Heart left ventricle (tissue), 16 donors: ENCODE measurements at regions of chr9 and their contacts with region 1.

Region 1: DNA sequence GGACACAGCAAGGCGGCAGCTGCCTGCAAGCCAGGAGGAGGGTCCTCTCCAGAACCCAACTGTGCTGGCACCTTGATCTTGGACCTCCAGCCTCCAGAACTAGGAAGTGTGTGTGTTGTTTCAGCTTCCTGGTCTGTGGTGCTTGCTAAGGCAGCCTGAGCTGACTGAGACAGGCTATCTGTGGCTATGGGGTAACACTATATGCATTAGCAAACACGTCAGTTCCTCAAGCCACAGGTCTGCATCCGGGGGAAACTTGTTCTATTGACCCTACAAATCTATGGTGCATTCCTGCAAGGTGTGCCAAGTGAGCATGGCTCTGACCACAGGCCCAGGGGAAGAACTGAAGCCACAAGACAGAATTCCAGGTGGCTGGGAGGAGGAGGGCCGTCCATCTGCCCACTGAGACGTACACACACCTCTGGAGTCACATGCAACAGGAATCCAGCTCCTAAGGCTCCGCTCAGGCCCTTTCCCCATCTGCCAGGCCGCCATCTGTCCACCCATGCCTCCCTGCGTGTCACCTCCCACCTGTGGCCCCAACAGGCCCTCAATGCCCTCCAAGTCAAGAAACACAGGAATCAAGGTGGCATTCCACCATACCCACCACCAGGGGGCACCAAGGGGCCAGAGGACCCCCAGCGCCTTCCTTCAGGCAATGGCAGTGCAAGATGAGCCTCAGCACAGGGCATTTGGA is 174.9 kb downstream of the ROR2 start:
- DNase-seq: peak; percentile 38 to 77 (median 54)
- ATAC-seq: peak in 3 of 4 donors; percentile 67 to 84 (median 72)
- H3K4me3 ChIP-seq: no peak overlapping the region
- H3K27ac ChIP-seq: peak overlapping the region in 1 of 12 donors; percentile 48
- H3K4me1 ChIP-seq: peaks cover 0 to 5% (median 0%) of the 10 kb centered on the region in 12 donors
- H3K27me3 ChIP-seq: peaks cover 0 to 13% (median 0%) of the 10 kb centered on the region in 9 donors
- CTCF ChIP-seq: peak; percentile 66 to 86 (median 76)
- POLR2A ChIP-seq: no peak

Region 2: GRCh38 chr9:91949946-91950664 is 174.9 kb after region 1 on chr9 and contains the start of gene ROR2:
- intact Hi-C with region 1: loop called (anchors 1 to 10 kb)
- DNase-seq: peak in 4 of 5 donors; percentile 42 to 78 (median 65)
- ATAC-seq: peak in 3 of 4 donors; percentile 66 to 91 (median 84)
- H3K4me3 ChIP-seq: peak within 1 kb of the TSS; percentile 29 to 64 (median 50)
- H3K27ac ChIP-seq: peak within 1 kb of the TSS in 3 of 12 donors; percentile 34 to 95 (median 41)
- H3K4me1 ChIP-seq: peaks cover 0 to 24% (median 12%) of the 10 kb centered on the region in 12 donors
- H3K27me3 ChIP-seq: peaks cover 18 to 75% (median 36%) of the 10 kb centered on the region in 9 donors
- CTCF ChIP-seq: peak; percentile 22 to 66 (median 51)
- POLR2A ChIP-seq: no peak
- total RNA-seq, gene ROR2: 0.18 to 9.0 (median 0.50) TPM

Region 3: GRCh38 chr9:91978739-91979414 is 203.7 kb after region 1 on chr9:
- intact Hi-C with region 1: loop called in 2 of 10 experiments (anchors 5 kb)
- DNase-seq: no peak
- ATAC-seq: peak in 1 of 4 donors; percentile 54
- H3K4me3 ChIP-seq: no peak overlapping the region
- H3K27ac ChIP-seq: no peak overlapping the region
- H3K4me1 ChIP-seq: no peaks in the 10 kb centered on the region
- H3K27me3 ChIP-seq: peaks cover 0 to 3% (median 0%) of the 10 kb centered on the region in 9 donors
- CTCF ChIP-seq: peak in 7 of 12 donors; percentile 7 to 40 (median 20)
- POLR2A ChIP-seq: no peak